Left ventricle myocardium superior (tissue), 1 donor: ENCODE measurements at regions of chr17 and their contacts with region 1.

Region 1: DNA sequence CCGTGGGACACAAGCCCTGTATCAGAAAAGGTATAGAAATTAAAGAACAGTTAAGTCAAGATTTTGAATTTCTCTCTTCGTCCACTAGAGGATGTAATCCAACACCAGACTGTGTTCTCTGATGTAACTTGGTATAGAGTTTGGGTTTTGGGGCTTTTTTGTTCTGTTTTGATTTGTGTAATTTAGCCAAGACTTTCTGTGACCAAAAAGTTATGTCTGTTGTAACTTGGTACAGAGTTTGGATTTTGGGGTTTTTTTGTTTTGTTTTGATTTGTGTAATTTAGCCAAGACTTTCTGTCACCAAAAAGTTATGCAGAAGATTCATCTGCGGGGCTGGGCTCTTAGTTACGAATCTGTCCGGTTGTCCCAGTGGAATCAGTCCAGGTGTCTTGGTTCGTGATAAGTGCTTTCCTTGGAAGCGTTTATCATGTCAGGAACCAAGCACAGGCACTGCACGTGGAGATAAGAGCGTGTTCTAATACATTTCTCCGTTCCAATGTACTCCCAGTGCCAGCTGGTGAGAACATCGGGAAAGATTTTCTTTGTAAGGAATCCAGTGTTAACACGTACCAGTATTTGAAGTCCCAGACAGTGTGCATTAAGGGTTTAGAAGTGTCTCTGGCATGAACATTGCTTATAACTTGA is 44.1 kb upstream of the SEC14L1 start:
- DNase-seq: no peak
- ATAC-seq: peak; percentile 68

Region 2: DNA sequence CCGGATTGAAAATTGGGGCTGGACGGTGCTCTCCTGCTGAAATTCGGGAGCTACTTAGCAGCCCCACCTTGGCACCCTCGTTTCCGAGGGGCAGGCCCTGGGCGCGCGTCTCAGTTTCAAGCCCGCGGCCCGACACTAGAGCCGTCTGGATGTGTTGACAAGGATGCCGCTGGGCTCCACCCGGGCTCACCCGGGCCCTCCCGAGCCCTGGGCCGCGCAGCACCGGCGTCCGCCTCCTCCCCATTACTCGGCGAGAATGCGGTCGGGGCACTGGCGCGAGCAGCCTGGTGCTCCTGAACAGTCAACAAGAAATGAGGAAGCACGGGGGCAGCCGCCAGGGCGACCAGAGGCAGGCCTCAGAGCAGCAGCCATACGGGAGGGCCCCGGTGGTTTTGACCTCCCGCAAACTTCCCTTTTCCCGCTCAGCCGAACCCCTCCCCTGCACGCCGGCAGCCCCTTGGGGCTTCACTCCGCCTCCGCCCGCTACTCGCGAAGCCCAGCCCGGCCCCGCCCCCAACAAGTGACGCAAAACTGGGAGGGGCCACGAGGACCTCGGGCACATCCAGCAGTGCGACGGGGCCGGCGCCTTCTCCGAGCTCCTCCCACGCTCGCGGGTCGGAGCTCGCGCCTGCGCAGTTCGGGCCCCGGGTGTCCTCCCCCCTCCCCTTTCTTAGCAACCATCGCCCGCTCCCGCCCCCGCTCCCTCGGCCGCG is 43.6 kb after region 1 on chr17:
- intact Hi-C with region 1: loop called (anchors 10 kb)
- DNase-seq: peak; percentile 100
- ATAC-seq: peak; percentile 98

Region 3: GRCh38 chr17:77208217-77208808 is 111.6 kb after region 1 on chr17:
- intact Hi-C with region 1: loop called (anchors 10 kb)
- DNase-seq: no peak
- ATAC-seq: peak; percentile 79